ENCODE measurements at regions of chr1 and their contacts with region 1.

Region 1: DNA sequence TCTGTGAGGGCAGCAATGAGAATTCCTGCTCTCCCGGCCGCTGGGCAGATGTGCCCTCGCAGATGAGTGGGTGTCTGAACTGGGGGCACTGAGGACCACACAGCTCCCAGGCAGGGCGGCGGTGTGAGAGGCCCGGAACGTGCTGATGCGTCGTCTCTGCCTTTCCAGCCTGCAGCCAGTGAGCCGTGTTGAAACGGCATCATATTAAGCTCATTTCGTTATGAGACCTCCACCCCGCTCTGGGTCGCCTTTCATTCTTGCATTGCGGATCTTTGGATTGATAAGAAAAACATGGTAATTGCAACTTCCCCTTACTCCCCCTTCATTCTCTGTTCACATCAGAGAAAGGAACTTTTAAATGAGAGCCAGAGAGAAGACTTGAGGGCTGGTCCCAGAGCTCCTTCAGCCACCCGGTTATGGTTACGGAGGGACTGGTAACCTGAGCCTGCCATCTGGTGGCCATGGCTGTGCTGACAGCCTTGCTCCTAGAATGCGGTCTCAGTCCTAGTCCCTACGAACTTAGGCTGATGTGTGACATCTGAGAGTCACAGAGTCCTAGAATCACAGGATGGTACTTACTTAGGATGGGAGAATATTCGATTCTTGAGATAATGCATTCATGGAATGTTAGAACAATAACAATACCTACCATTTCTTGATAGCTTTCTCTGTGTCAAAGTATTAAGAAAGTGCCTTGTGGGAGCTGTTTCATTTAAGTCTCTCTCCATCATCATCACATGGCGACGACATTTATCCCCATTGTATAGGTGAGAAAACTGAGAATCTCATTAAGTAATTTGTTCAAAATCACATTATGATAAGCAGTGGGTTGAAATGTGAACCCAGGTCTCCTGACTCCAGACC is 271.0 kb downstream of the TRABD2B start:
- DNase-seq: peak; percentile 49
- ATAC-seq: peak; percentile 98
- H3K4me3 ChIP-seq: no peak overlapping the region
- H3K27ac ChIP-seq: no peak overlapping the region
- H3K4me1 ChIP-seq: no peaks in the 10 kb centered on the region
- H3K27me3 ChIP-seq: no peaks in the 10 kb centered on the region
- CTCF ChIP-seq: peak; percentile 81 to 95 (median 92)
- POLR2A ChIP-seq: no peak
- RAD21 ChIP-seq: peak; percentile 91

Region 2: GRCh38 chr1:47179017-47179987 is 546.9 kb before region 1 on chr1:
- CTCF ChIA-PET with region 1: interaction called, 20 read pairs
- POLR2A ChIA-PET with region 1: no interaction called
- RAD21 ChIA-PET with region 1: no interaction called
- intact Hi-C with region 1: loop called (anchors 5 kb)
- DNase-seq: peak; percentile 89
- ATAC-seq: peak; percentile 81
- H3K4me3 ChIP-seq: peak overlapping the region; percentile 49 to 65
- H3K27ac ChIP-seq: peak overlapping the region; percentile 41
- H3K4me1 ChIP-seq: peaks cover 4 to 26% of the 10 kb centered on the region in 2 experiments
- H3K27me3 ChIP-seq: no peaks in the 10 kb centered on the region
- CTCF ChIP-seq: peak; percentile 89 to 95 (median 89)
- POLR2A ChIP-seq: no peak
- RAD21 ChIP-seq: peak; percentile 95

Region 3: DNA sequence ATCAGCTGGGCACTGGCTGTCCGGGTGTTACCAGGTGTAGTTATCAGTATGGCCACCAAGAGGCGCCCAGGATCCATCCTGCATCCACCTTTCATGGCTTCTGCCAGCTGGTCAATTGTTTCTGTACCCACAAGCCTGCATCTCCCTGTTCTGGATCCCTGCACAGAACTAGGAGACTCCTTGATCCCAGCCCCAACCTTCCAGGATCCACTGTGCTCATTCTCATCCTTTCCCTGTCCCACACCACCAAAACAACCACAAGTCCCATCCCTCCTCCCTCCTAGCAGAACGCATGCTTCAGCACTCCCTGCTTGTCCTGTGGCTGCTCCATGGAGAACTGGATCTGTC is 337.4 kb before region 1 on chr1:
- CTCF ChIA-PET with region 1: interaction called, 48 read pairs
- POLR2A ChIA-PET with region 1: interaction called, 3 read pairs
- RAD21 ChIA-PET with region 1: interaction called, 3 to 4 read pairs
- intact Hi-C with region 1: loop called (anchors 1 kb)
- DNase-seq: peak; percentile 35
- ATAC-seq: peak; percentile 91
- H3K4me3 ChIP-seq: no peak overlapping the region
- H3K27ac ChIP-seq: no peak overlapping the region
- H3K4me1 ChIP-seq: no peaks in the 10 kb centered on the region
- H3K27me3 ChIP-seq: no peaks in the 10 kb centered on the region
- CTCF ChIP-seq: peak; percentile 73 to 80 (median 79)
- POLR2A ChIP-seq: no peak
- RAD21 ChIP-seq: peak; percentile 87

Region 4: DNA sequence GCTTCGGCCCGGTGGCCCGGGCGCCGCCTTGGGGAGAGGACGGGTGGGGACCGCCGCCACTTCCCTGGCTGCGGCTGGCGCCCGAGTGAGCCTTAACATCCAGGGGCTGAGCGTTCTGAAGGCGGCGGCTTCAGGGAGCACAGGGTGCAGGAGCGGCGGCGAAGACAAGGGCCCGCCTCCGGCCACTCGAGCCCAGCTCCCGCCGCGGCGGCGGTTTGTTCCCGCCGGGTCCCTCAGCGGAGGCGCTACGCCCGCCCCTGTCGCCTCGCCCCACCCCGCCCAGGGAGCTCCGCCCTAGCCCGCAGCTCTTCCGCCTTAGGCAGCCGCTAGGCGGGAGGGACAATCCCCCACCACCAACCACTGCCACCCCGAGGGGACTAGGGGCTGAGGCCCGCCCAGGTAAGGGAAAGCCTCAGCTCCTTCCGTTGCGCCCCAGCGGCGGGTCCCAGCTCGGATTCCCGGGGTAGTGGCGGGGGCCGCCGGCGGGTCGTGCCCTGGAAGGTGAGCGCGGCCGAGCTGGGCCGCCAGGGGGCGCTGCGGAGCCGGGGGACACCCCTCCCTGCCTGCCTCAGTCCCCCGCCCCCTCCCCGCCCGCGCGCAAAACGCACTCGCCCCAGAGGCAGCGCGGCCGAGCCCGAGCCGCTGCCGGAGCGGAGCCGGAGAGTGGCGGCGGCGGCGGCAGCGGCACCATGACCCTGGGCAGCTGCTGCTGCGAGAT is 288.6 kb before region 1 on chr1 and contains the start of gene FOXD2:
- CTCF ChIA-PET with region 1: interaction called, 87 read pairs
- POLR2A ChIA-PET with region 1: interaction called, 5 read pairs
- RAD21 ChIA-PET with region 1: interaction called, 6 to 11 read pairs
- intact Hi-C with region 1: loop called (anchors 1 kb)
- DNase-seq: peak; percentile 79
- ATAC-seq: peak; percentile 89
- H3K4me3 ChIP-seq: peak within 1 kb of the TSS; percentile 86 to 95
- H3K27ac ChIP-seq: peak within 1 kb of the TSS; percentile 96
- H3K4me1 ChIP-seq: peaks cover 3 to 10% of the 10 kb centered on the region in 2 experiments; a peak in 3 of 4 replicates
- H3K27me3 ChIP-seq: no peaks in the 10 kb centered on the region
- CTCF ChIP-seq: peak; percentile 78 to 81 (median 81)
- POLR2A ChIP-seq: peak; percentile 55
- RAD21 ChIP-seq: peak; percentile 38; the same call in 1 of the 2 replicates
- total RNA-seq, gene FOXD2: 1.9 TPM

Region 5: GRCh38 chr1:47527658-47528255 is 198.5 kb before region 1 on chr1:
- CTCF ChIA-PET with region 1: interaction called, 14 read pairs
- POLR2A ChIA-PET with region 1: no interaction called
- RAD21 ChIA-PET with region 1: interaction called in 1 of 2 experiments, 3 read pairs
- intact Hi-C with region 1: loop called (anchors 5 kb)
- DNase-seq: peak; percentile 15
- ATAC-seq: peak; percentile 78
- H3K4me3 ChIP-seq: no peak overlapping the region
- H3K27ac ChIP-seq: no peak overlapping the region
- H3K4me1 ChIP-seq: no peaks in the 10 kb centered on the region
- H3K27me3 ChIP-seq: no peaks in the 10 kb centered on the region
- CTCF ChIP-seq: peak; percentile 57 to 80 (median 63)
- POLR2A ChIP-seq: no peak
- RAD21 ChIP-seq: peak; percentile 83

Region 6: GRCh38 chr1:47669081-47669585 is 57.1 kb before region 1 on chr1:
- CTCF ChIA-PET with region 1: no interaction called
- POLR2A ChIA-PET with region 1: no interaction called
- RAD21 ChIA-PET with region 1: no interaction called
- intact Hi-C with region 1: no loop called
- DNase-seq: no peak
- ATAC-seq: no peak
- H3K4me3 ChIP-seq: no peak overlapping the region
- H3K27ac ChIP-seq: no peak overlapping the region
- H3K4me1 ChIP-seq: no peaks in the 10 kb centered on the region
- H3K27me3 ChIP-seq: no peaks in the 10 kb centered on the region
- CTCF ChIP-seq: no peak
- POLR2A ChIP-seq: no peak
- RAD21 ChIP-seq: no peak

Region 7: GRCh38 chr1:47738560-47739182 is 12.4 kb after region 1 on chr1:
- CTCF ChIA-PET with region 1: interaction called, 12 read pairs
- POLR2A ChIA-PET with region 1: no interaction called
- RAD21 ChIA-PET with region 1: no interaction called
- intact Hi-C with region 1: no loop called
- DNase-seq: no peak
- ATAC-seq: peak; percentile 95
- H3K4me3 ChIP-seq: no peak overlapping the region
- H3K27ac ChIP-seq: no peak overlapping the region
- H3K4me1 ChIP-seq: no peaks in the 10 kb centered on the region
- H3K27me3 ChIP-seq: peaks cover 6% of the 10 kb centered on the region; the same call in 1 of the 2 replicates
- CTCF ChIP-seq: peak; percentile 50 to 85 (median 74); a peak in 5 of 6 replicates
- POLR2A ChIP-seq: no peak
- RAD21 ChIP-seq: peak; percentile 73

Region 8: DNA sequence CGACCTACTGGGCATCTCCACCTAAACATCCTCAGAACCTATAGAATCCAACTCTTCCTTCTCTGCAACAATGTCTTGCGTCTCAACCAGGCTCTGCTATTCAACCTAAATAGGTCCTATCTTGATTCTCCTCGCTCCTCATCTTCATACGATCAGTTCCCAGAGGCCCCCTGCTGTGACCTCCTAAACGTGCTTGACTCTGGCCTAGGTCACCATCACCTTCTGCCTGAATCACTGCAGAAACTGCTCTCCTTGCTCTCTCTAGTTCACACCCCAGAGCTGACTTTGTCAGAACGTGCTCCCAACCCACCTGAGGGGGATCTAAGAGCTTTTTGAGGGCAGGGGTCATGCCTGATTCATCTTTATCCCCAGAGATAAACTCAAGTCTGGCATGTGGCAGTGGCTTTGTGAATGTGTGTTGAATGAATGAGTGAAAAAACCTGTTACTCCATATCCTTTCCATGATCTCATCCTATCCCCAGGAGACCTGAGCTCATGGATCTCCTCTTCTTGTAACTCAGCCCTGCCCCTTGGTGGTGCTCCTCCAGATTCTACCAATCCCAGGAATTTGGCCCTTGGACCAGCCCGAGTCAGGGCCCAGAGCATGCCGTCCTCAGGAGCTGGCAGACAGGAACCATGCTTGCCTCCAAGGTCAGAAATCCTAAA is 56.0 kb after region 1 on chr1:
- CTCF ChIA-PET with region 1: no interaction called
- POLR2A ChIA-PET with region 1: no interaction called
- RAD21 ChIA-PET with region 1: no interaction called
- intact Hi-C with region 1: no loop called
- DNase-seq: no peak
- ATAC-seq: no peak
- H3K4me3 ChIP-seq: no peak overlapping the region
- H3K27ac ChIP-seq: no peak overlapping the region
- H3K4me1 ChIP-seq: no peaks in the 10 kb centered on the region
- H3K27me3 ChIP-seq: peaks cover 3% of the 10 kb centered on the region; the same call in 1 of the 2 replicates
- CTCF ChIP-seq: no peak
- POLR2A ChIP-seq: no peak
- RAD21 ChIP-seq: no peak

Measured in HCT116 (cell line).